Psoas muscle (tissue), 8 donors: ENCODE measurements at regions of chr12 and their contacts with region 1.

Region 1: GRCh38 chr12:71663561-71664294 is at the start of gene ZFC3H1:
- DNase-seq: peak; percentile 89 to 95
- ATAC-seq: peak; percentile 94 to 96 (median 95)
- H3K4me3 ChIP-seq: peak within 1 kb of the TSS; percentile 93
- H3K27ac ChIP-seq: peak within 1 kb of the TSS; percentile 97
- H3K4me1 ChIP-seq: peaks cover 27% of the 10 kb centered on the region
- H3K27me3 ChIP-seq: no peaks in the 10 kb centered on the region
- CTCF ChIP-seq: peak; percentile 20
- total RNA-seq, gene ZFC3H1: 9.8 to 18.1 (median 15.5) TPM

Region 2: DNA sequence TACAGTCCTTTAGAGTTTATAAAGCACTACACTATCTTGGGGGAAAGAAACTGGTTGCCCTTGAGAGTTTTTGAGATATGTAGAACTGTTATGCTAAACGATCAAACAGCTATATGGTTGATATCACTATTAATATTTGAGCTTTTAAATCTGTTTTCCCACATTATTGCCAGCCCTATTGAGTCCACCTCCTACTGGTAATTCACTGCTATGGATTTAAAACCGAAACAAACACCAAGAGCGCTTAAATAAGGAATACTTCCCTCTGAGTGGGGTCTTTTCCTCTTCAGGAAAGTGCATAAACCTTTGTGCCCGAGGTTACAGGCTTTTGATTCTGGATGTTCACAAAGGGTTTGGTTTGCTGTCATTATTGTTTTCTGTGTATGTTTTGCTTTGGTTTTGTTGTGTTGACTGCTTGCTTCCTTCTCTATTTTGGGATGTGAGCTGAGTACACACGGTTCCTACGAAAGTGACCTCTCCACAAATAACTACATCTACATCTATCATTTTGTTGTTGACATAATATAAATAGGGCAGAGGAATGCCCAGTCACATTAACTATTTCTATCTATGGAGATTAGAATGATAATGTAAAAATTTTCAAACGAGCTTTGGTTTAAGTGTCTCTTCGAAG is 179.3 kb before region 1 on chr12:
- intact Hi-C with region 1: no loop called
- DNase-seq: no peak
- ATAC-seq: peak; percentile 76 to 94 (median 91)
- H3K4me3 ChIP-seq: peak overlapping the region; percentile 52
- H3K27ac ChIP-seq: peak overlapping the region; percentile 75
- H3K4me1 ChIP-seq: peaks cover 8% of the 10 kb centered on the region
- H3K27me3 ChIP-seq: no peaks in the 10 kb centered on the region
- CTCF ChIP-seq: peak; percentile 13

Region 3: DNA sequence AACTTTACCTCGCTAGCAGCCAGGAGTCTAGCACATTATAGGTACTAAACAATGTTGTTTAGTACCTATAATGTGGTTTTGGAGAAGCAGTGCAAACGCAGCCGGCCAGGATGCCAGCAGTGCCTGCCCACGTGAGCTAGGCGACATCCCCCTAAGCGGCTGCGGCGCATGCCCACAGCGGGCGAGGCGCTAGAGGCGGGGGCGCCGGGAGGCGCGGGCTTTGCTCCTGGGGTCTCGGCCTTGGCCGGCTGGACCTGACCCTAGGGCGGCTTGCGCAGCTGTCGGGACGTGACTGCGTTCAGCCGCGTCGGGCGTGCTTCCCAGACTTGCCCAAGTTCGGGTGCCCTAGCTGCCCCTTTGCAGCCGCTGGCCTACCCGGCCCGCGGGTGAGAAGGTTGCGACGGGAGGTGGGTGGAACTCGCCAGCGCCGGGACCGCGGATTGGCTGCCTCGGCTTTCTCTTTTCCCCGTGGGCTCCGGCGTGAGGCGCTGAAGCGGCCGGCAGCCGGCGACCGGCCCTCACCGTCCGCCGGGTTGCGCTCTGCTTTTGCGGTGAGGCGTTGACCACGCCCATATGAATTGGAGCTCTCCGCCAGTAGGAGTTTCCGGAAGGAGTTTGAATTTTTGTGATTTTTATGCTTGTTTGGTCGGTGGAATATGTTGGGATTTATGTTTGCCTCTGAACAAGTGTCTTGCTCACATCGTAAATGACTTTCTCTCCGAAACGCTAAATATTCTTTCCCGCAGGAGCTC is 22.4 kb after region 1 on chr12 and contains the start of gene TMEM19:
- intact Hi-C with region 1: loop called in 1 of 2 experiments (anchors 2 kb)
- DNase-seq: peak; percentile 92 to 95
- ATAC-seq: peak; percentile 97 to 98 (median 98)
- H3K4me3 ChIP-seq: peak within 1 kb of the TSS; percentile 84
- H3K27ac ChIP-seq: peak within 1 kb of the TSS; percentile 95
- H3K4me1 ChIP-seq: peaks cover 34% of the 10 kb centered on the region
- H3K27me3 ChIP-seq: no peaks in the 10 kb centered on the region
- CTCF ChIP-seq: no peak
- total RNA-seq, gene TMEM19: 10.4 to 29.7 (median 23.0) TPM